ENCODE measurements at regions of chr18 and their contacts with region 1.

Region 1: GRCh38 chr18:830315-830901 is 18.4 kb upstream of the YES1 start:
- DNase-seq: no peak
- H3K4me3 ChIP-seq: no peak overlapping the region
- H3K27ac ChIP-seq: no peak overlapping the region
- H3K4me1 ChIP-seq: no peaks in the 10 kb centered on the region
- H3K27me3 ChIP-seq: no peaks in the 10 kb centered on the region
- CTCF ChIP-seq: no peak

Region 2: GRCh38 chr18:741931-742512 is 88.4 kb before region 1 on chr18:
- intact Hi-C with region 1: loop called (anchors 1 kb)
- DNase-seq: no peak
- H3K4me3 ChIP-seq: no peak overlapping the region
- H3K27ac ChIP-seq: no peak overlapping the region
- H3K4me1 ChIP-seq: no peaks in the 10 kb centered on the region
- H3K27me3 ChIP-seq: no peaks in the 10 kb centered on the region
- CTCF ChIP-seq: peak; percentile 61 to 73 (median 66)

Measured in ascending aorta (tissue), 2 donors.